A549 (cell line): ENCODE measurements at regions of chr6 and their contacts with region 1.

Region 1: GRCh38 chr6:53171605-53172446 is 23.2 kb upstream of the GCM1 start:
- DNase-seq: peak; percentile 33 to 75
- ATAC-seq: peak; percentile 85 to 90
- H3K4me3 ChIP-seq: no peak overlapping the region
- H3K27ac ChIP-seq: no peak overlapping the region
- H3K4me1 ChIP-seq: peaks cover 7% of the 10 kb centered on the region; the same call in 1 of the 3 replicates
- CTCF ChIP-seq: peak; percentile 99
- EP300 ChIP-seq: no peak
- POLR2A ChIP-seq: no peak
- RAD21 ChIP-seq: peak; percentile 99

Region 2: GRCh38 chr6:52304983-52305390 is 866.8 kb before region 1 on chr6:
- CTCF ChIA-PET with region 1: no interaction called
- POLR2A ChIA-PET with region 1: no interaction called
- DNase-seq: no peak
- ATAC-seq: no peak
- H3K4me3 ChIP-seq: no peak overlapping the region
- H3K27ac ChIP-seq: no peak overlapping the region
- H3K4me1 ChIP-seq: no peaks in the 10 kb centered on the region
- CTCF ChIP-seq: no peak
- EP300 ChIP-seq: no peak
- POLR2A ChIP-seq: no peak
- RAD21 ChIP-seq: no peak

Region 3: DNA sequence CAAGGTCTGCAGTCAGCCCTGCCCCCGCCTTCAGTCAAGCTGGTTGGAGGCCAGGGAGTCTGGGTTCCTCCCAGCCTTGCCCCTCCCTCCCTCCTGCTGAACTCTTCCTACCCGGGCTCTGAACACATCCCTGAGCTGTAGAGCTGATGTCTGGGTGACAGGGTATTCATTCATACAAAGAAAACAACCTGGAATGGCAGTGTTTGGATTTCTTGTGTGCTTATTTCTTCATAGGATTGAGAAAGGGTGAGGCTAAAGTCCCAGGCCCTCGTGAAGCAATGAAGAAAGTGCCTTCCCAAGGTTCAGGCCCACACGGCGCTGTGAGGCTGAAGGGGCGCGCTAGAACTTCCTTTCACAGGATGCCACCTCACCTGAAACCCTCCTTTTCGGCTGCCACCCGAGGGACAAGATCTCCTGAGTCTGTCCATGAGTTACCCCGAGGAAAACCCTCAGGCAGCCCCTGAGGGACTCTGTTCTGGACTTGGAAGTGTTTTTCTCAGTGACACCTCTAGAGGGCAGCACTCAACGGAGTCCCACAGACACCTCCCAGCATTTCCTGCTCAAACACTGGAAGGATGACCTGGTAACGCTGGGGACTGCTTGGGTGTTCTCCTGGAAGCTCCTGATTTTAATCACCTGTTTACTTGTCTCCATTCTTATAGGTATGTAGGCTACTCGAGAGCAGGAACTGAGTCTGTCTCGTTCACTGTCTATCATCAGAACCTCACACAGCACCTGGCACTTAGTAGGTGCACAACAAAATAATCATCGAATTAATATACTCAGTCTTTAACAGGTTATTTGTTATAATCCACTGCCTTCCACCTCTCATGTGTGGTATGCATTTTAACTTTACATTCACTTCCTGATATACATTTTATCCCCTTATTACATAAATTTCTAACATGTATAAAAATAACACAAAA is 356.4 kb before region 1 on chr6:
- CTCF ChIA-PET with region 1: no interaction called
- POLR2A ChIA-PET with region 1: no interaction called
- DNase-seq: peak; percentile 61 to 64
- ATAC-seq: peak; percentile 98 to 99
- H3K4me3 ChIP-seq: no peak overlapping the region
- H3K27ac ChIP-seq: peak overlapping the region in 1 of 2 experiments; percentile 4; a peak in 1 of 6 replicates
- H3K4me1 ChIP-seq: no peaks in the 10 kb centered on the region
- CTCF ChIP-seq: peak; percentile 54
- EP300 ChIP-seq: no peak
- POLR2A ChIP-seq: no peak
- RAD21 ChIP-seq: peak; percentile 39 to 43; a peak in 4 of 5 replicates

Region 4: DNA sequence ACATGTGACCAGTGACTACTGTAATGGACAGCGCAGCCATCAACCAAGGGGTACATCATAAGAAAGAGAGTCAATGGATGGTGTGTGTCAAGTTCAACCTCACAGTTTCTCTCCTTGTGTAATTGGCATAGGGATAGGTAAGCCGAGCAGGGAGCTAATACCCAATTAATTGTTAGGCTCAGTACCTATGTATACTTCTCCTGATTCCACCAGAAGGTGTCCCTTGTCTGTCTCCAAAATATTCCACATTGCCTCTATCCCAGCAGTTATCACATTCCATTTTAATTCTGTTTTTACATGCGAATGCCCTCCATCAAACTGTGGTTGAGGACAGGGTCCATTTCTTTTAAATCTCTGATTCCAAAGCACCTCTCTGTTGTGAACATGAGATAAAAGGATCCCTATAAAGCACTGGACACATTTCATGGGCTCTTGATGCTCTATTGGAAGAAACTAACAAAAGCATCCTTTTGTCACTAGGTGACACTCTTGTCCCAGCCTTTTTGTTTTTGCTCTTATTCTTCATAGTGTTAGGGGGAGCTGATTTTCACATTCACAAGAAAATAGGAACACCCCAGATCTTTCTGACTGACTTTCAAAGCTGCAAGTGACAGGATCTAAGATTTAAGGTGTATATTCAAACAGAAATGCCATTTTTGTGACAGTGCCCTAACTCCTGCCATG is 67.7 kb before region 1 on chr6:
- CTCF ChIA-PET with region 1: no interaction called
- POLR2A ChIA-PET with region 1: no interaction called
- DNase-seq: peak in 1 of 2 experiments; percentile 22
- ATAC-seq: peak; percentile 56 to 64; a peak in 3 of 6 replicates
- H3K4me3 ChIP-seq: no peak overlapping the region
- H3K27ac ChIP-seq: no peak overlapping the region
- H3K4me1 ChIP-seq: no peaks in the 10 kb centered on the region
- CTCF ChIP-seq: peak; percentile 36
- EP300 ChIP-seq: no peak
- POLR2A ChIP-seq: no peak
- RAD21 ChIP-seq: peak; percentile 51 to 53; a peak in 4 of 5 replicates

Region 5: DNA sequence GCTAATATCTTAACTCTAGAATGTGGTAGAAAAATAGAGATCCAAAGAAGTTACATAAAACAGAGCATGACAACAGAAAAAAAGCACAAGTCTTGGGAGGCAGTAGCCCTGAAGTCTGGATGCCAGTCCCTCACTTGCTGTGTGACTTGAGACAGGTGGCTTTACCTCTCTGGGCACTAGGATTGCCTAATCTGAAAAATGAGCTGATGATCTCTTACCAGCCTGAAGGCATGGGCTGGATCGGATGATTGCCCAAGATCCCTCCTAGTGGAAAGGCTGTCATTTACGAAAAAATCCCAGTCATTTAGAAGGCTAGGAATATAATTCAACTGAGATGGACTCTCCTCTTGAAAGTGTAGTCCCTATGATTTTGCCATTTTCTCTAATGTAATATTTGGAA is 12.3 kb before region 1 on chr6:
- CTCF ChIA-PET with region 1: interaction called, 15 read pairs
- POLR2A ChIA-PET with region 1: no interaction called
- DNase-seq: peak; percentile 12 to 20
- ATAC-seq: peak; percentile 40 to 54; a peak in 1 of 6 replicates
- H3K4me3 ChIP-seq: no peak overlapping the region
- H3K27ac ChIP-seq: no peak overlapping the region
- H3K4me1 ChIP-seq: no peaks in the 10 kb centered on the region
- CTCF ChIP-seq: no peak
- EP300 ChIP-seq: no peak
- POLR2A ChIP-seq: no peak
- RAD21 ChIP-seq: no peak

Region 6: GRCh38 chr6:53410508-53411258 is 238.9 kb after region 1 on chr6:
- CTCF ChIA-PET with region 1: interaction called, 27 read pairs
- POLR2A ChIA-PET with region 1: no interaction called
- DNase-seq: peak; percentile 28 to 39
- ATAC-seq: peak; percentile 87 to 93
- H3K4me3 ChIP-seq: no peak overlapping the region
- H3K27ac ChIP-seq: 0 out of 6 replicates have a peak overlapping the region, but pooled peaks of 1 of the 2 experiments have one; percentile 6
- H3K4me1 ChIP-seq: no peaks in the 10 kb centered on the region
- CTCF ChIP-seq: peak; percentile 55
- EP300 ChIP-seq: no peak
- POLR2A ChIP-seq: no peak
- RAD21 ChIP-seq: peak; percentile 75 to 82

Region 7: DNA sequence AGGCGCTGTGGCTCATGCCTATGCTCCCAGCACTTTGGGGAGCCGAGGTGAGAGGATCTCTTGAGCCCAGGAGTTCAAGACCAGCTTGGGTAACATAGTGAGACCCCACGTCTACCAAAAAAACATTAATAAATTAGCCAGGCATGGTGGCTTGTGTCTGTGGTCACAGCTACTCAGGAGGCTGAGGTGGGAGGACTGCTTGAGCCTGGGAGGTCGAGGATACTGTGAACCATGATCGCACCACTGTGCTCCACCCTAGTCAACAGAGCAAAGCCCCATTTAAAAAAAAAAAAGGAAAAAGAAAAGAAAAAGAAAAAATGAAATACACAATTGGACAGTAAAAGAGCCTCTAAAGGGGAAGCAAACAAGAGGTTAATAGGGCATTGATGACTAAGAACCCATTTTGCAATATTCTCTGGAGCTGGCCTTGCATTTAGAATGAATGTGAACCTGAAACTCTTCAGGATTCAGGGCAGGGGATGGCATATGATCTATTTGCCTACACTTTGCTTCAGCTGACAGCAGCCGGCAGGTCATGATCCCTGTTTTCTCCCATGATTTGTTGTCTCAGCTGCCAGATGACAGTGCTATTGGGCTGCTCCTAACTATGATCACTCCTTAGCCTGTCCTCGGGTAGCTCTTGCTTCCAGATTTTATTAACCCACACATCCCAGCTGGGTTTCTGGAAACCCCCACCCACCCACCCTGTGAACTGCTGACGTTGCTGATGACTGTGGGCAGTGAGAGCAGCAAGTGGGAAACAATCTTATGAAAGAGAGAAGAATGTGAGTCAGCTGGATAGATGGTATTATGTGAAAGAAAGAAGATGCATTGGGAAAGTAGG is 260.7 kb after region 1 on chr6:
- CTCF ChIA-PET with region 1: interaction called, 40 read pairs
- POLR2A ChIA-PET with region 1: no interaction called
- DNase-seq: peak in 1 of 2 experiments; percentile 63
- ATAC-seq: peak; percentile 83 to 84
- H3K4me3 ChIP-seq: no peak overlapping the region
- H3K27ac ChIP-seq: peak overlapping the region in 1 of 2 experiments; percentile 72; a peak in 3 of 6 replicates
- H3K4me1 ChIP-seq: peaks cover 21% of the 10 kb centered on the region
- CTCF ChIP-seq: no peak
- EP300 ChIP-seq: peak in 1 of 2 experiments; percentile 10; a peak in 1 of 5 replicates
- POLR2A ChIP-seq: no peak
- RAD21 ChIP-seq: no peak

Region 8: GRCh38 chr6:53437557-53438202 is 265.9 kb after region 1 on chr6:
- CTCF ChIA-PET with region 1: interaction called, 40 read pairs
- POLR2A ChIA-PET with region 1: no interaction called
- DNase-seq: peak; percentile 37 to 73
- ATAC-seq: peak; percentile 81 to 96
- H3K4me3 ChIP-seq: no peak overlapping the region
- H3K27ac ChIP-seq: peak overlapping the region; percentile 58 to 73; a peak in 4 of 6 replicates
- H3K4me1 ChIP-seq: peaks cover 18% of the 10 kb centered on the region
- CTCF ChIP-seq: peak; percentile 67
- EP300 ChIP-seq: no peak
- POLR2A ChIP-seq: no peak
- RAD21 ChIP-seq: peak; percentile 77 to 81